ENCODE measurements at regions of chr16 and their contacts with region 1.

Region 1: DNA sequence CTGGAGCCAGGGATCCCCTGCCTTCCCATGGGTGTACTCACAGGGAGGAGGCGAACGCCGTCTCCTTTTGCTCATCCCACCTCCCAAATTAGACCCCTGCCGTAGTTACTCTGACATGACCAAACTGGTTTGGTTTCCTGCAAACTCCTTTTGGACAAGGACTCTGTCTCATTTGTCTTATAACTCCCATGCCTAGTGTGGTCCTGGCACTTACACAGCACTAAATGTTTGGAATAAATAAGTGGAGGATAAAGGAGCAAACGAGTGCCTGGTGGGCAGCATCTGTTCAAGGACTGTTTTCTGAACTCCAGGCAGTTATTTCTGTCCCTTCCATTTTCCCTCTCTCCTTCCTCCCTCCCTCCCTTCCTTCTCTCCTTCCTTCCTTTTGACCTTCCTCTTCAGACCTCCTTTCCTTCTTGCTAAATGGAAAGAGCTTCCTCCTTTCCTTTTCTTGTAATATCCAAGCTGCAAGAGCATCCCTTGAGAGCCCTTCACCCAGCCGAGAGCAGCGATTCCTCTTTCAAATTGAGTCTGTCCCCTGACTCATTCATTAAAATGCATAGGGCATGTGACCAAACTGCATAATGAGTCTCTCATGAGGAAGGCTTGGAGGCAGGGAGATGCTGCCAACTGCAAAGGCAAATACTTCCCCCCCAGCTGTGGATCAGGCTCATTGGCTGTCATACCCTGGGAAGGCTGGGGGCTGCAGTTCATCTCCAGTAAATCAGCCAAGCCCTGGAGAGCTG is 36.8 kb downstream of the CHD9 start:
- DNase-seq: peak; percentile 82
- ATAC-seq: peak; percentile 57

Region 2: GRCh38 chr16:53065461-53066061 is 26.1 kb before region 1 on chr16:
- intact Hi-C with region 1: loop called (anchors 2 kb)
- DNase-seq: no peak
- ATAC-seq: peak; percentile 70

Region 3: DNA sequence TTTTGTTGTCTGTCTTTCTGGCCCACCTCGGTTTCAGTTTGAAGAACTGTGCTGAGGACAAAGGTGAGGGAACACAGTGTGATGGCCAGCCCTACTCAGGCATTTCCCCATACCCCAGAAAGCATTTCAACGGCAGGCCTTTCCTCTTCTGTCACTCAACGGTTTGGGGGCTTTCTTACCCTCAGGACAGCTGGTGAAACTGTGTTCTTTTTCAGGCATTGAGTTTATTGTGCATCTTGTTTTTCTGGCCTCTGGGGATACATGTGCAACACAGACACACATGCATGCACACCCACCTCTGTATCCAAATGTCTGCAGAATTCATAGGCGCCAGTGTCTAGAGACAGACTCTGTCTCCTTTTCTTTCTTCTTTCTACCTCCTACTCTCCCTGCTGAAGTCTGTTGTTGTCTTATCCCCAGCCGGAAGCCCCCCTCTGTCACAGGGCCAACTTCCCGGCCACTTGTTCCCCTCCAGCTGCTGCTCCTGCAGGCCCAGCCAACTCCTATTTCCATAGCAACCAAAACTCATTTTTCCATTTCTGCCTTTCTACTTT is 19.8 kb before region 1 on chr16:
- intact Hi-C with region 1: loop called (anchors 1 kb)
- DNase-seq: peak; percentile 90
- ATAC-seq: peak; percentile 88

Measured in Right ventricle myocardium inferior (tissue), 1 donor.